Posterior vena cava (tissue), 2 donors: ENCODE measurements at regions of chr7 and their contacts with region 1.

Region 1: GRCh38 chr7:8963722-8964121 is 530.3 kb downstream of the NXPH1 start:
- DNase-seq: no peak

Region 2: DNA sequence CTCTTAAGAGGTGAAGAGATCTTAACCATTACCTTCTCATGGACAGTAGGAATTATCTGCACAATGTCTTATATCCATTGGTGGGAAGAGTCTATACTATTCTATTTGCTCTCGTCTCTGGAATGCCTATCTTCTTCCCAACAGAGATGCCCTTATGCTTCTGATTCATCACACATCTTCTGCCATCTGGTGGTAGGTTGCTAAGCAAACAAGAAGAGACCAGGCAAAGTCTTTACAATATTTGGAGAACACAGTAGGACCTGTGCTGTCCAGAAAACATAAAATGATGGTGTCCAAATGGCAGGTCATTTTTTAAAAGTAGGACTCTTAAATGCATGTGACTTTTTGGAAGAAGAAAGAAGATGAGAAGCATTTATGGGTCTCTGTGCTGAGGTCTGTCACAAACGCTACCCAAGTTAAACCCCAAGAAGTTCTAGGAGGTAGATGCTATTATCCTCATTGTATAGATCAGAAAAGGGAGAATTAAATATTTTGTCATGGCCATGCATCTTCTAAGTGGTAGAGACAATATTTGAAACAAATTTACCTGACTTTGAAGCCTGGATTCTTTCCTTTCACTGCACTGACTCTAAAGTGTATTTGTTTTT is 598.1 kb before region 1 on chr7:
- intact Hi-C with region 1: no loop called
- DNase-seq: no peak

Region 3: DNA sequence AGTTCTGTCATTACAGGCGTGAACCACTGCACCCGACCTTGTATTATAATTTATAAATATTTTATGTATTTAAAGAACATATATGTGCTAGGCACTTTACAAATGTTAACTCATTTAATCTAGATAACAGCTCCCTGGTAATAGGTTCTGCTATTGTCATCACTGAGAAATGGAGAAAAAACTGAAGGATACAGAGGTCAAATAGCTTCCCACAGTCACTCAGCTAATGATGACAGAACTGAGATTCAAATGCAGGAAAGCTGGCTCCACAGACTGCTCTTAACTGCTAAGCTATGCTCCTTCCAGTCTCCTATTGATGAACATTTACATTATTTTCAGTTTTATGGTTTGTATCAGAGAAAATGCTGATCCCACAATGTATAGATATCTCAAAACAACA is 501.4 kb before region 1 on chr7:
- intact Hi-C with region 1: loop called in 1 of 2 experiments (anchors 5 kb)
- DNase-seq: no peak